ENCODE measurements at regions of chr3 and their contacts with region 1.

Region 1: DNA sequence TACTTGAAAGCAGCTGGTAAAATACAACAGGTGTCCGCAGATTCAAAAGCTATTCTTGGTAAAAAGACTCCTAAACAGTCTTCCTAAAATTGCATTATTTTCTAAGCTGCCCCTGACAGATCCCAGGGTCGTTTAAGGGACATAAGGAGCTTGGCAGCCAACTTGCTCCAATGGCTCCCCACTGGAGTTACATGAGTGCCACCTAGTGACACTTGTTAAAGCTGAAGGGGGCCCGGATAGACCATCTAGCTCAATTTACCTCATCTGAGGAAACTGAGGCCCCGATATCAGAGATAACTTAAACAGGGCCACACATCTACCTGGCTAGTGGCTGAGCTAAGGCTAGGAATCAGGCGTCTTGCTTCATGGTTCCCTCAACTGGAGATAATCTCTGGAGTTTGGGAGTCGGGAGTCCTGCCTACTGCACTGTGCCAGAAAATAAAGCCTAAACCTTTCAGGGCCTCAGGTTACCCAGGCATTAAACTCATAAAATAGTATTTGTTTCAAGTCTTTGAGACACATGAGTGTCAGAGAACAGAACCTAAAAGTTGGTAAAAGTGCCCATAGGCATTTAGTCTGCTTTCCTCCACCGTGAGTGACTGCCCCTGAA is 6.5 kb upstream of the TBC1D23 start:
- DNase-seq: peak in 1 of 3 donors; percentile 52
- ATAC-seq: peak; percentile 91 to 97 (median 94)
- H3K4me3 ChIP-seq: no peak overlapping the region
- H3K27ac ChIP-seq: no peak overlapping the region
- H3K4me1 ChIP-seq: peaks cover 0 to 9% (median 0%) of the 10 kb centered on the region in 4 donors
- H3K27me3 ChIP-seq: no peaks in the 10 kb centered on the region
- CTCF ChIP-seq: peak; percentile 65 to 75 (median 74)
- POLR2A ChIP-seq: no peak

Region 2: GRCh38 chr3:100073899-100074307 is 180.4 kb before region 1 on chr3:
- intact Hi-C with region 1: loop called in 1 of 2 experiments (anchors 5 kb)
- DNase-seq: no peak
- ATAC-seq: no peak
- H3K4me3 ChIP-seq: no peak overlapping the region
- H3K27ac ChIP-seq: peak overlapping the region in 2 of 3 donors; percentile 4 to 27
- H3K4me1 ChIP-seq: peaks cover 0 to 19% (median 7%) of the 10 kb centered on the region in 4 donors
- H3K27me3 ChIP-seq: no peaks in the 10 kb centered on the region
- CTCF ChIP-seq: no peak
- POLR2A ChIP-seq: no peak

Region 3: DNA sequence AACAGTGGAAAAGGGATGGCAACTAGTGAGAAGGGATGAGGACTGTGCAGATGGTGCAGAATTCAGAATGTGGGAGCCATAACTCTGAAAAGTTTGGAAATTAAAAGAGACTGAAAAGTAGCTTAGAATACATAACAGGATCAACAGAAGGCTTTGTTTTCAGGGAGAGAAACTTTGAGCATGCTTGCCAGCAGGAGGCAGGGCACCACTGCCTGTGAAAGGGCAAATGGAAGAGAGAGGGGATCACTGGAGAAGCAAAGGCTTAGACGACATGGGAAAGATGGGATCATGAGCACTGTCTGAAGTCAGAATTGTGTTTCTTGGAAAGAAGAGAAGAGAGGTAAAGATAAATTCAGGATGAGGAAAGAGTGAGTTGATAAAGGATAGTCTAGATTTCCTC is 639.3 kb after region 1 on chr3:
- intact Hi-C with region 1: no loop called
- DNase-seq: no peak
- ATAC-seq: peak in 2 of 4 donors; percentile 30 to 42
- H3K4me3 ChIP-seq: no peak overlapping the region
- H3K27ac ChIP-seq: no peak overlapping the region
- H3K4me1 ChIP-seq: no peaks in the 10 kb centered on the region
- H3K27me3 ChIP-seq: no peaks in the 10 kb centered on the region
- CTCF ChIP-seq: peak in 3 of 4 donors; percentile 25 to 32 (median 29)
- POLR2A ChIP-seq: no peak

Measured in right lobe of liver (tissue), 6 donors.